Vagina (tissue), 2 donors: ENCODE measurements at regions of chr11 and their contacts with region 1.

Region 1: DNA sequence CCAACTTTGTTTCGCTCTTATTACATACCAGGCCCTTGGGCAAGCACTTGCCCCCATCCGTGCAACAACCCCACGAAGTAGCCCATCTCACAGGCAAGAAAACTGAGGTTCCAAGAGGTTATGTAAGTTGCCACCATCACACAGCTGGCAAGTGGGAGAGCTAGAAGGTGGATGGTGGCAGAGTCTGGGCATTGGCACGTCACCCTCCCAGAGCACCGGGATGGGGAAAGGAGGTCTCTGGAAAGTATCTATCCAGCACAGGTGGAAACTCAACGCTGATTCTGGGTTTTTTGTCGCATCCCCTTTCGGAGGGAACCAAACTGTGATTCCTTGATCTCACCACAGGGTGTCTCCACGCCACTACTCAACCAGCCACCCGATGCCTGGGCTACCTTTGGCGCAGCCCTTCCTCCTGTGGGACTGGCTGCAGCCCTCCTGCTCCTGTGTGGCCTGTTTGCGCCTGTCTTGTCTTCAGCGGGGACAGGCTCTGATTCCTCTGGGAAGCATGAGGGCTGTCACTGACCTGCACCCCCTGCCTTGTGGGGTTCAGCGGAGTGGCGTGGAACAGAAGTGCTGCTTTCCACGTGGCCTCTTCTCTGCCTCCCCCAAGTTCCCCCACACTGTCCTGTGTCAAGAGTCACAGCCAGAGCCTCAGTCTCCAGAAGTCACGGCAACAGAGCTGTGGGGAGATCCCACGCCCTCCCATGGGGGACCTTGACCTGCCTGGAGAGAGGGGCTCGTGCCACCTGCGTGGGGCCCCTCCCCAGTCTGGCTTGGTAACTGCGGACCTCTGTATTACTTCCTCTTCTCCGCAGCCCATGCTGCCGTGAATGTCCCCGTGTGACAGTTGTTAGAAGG is 34.4 kb upstream of the TRIM29 start:
- DNase-seq: peak; percentile 87
- H3K4me3 ChIP-seq: no peak overlapping the region
- H3K27ac ChIP-seq: peak overlapping the region; percentile 34
- H3K4me1 ChIP-seq: peaks cover 36% of the 10 kb centered on the region
- H3K27me3 ChIP-seq: no peaks in the 10 kb centered on the region
- CTCF ChIP-seq: peak; percentile 70 to 89 (median 88)
- POLR2A ChIP-seq: no peak

Region 2: GRCh38 chr11:120229451-120230424 is 57.5 kb after region 1 on chr11:
- intact Hi-C with region 1: loop called (anchors 1 kb)
- DNase-seq: no peak
- H3K4me3 ChIP-seq: no peak overlapping the region
- H3K27ac ChIP-seq: peak overlapping the region; percentile 50
- H3K4me1 ChIP-seq: peaks cover 31% of the 10 kb centered on the region
- H3K27me3 ChIP-seq: no peaks in the 10 kb centered on the region
- CTCF ChIP-seq: peak; percentile 39 to 73 (median 73)
- POLR2A ChIP-seq: no peak

Region 3: GRCh38 chr11:120303004-120303637 is 130.8 kb after region 1 on chr11:
- intact Hi-C with region 1: loop called (anchors 5 kb)
- DNase-seq: no peak
- H3K4me3 ChIP-seq: no peak overlapping the region
- H3K27ac ChIP-seq: peak overlapping the region; percentile 58
- H3K4me1 ChIP-seq: peaks cover 15% of the 10 kb centered on the region
- H3K27me3 ChIP-seq: no peaks in the 10 kb centered on the region
- CTCF ChIP-seq: peak; percentile 56 to 81 (median 70)
- POLR2A ChIP-seq: no peak